Heart left ventricle (tissue), 16 donors: ENCODE measurements at regions of chr3 and their contacts with region 1.

Region 1: GRCh38 chr3:158718490-158719170 is 13.6 kb downstream of the RARRES1 start:
- DNase-seq: no peak
- ATAC-seq: peak in 3 of 4 donors; percentile 23 to 63 (median 32)
- H3K4me3 ChIP-seq: no peak overlapping the region
- H3K27ac ChIP-seq: peak overlapping the region in 2 of 12 donors; percentile 11 to 28
- H3K4me1 ChIP-seq: peaks cover 0 to 43% (median 19%) of the 10 kb centered on the region in 12 donors
- H3K27me3 ChIP-seq: no peaks in the 10 kb centered on the region
- CTCF ChIP-seq: no peak
- POLR2A ChIP-seq: no peak

Region 2: DNA sequence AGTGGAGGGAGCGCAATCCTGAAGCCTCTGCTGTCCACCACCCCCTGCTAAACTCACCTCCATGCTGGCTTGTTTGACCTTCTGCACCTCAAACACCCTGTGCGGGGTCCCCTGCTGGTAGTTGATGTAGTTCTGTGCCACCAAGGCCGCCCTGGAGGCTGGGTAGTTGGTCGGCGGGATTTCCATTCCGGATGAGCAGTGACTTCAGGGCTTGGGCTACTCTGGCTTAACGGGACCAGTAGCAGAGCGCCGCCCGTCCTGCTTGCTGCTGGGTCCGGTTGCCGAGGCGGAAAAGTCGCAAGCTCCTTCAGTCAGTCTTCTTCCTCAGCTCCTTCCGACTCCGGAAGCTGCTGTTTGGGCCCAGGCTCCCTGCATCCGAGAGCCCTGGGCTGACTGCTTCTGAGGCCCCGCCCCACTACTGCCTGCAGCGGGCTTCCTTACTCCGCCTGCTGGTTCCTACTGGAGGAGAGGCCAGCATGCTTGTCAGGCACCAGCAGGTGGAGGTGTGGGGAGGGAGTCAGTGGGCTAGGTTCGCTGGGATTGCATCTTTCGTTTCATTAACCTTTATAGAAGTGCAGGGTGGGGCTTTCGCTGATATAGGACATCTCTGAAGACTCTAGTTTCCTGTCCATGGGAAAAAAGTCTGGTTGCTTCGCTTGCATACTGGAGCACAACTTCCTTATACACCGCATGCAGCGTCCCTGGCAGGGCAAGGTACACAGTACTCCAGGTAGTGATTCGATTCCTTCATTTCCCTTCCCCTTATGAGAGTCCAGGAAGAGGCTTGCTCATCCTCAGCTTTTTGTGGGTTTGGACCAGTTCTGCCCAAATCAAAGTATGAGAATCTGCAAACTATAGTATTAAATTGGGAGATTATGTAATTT is 46.1 kb before region 1 on chr3 and contains the start of gene LXN:
- intact Hi-C with region 1: loop called in 1 of 10 experiments (anchors 5 kb)
- DNase-seq: peak; percentile 83 to 90 (median 85)
- ATAC-seq: peak; percentile 95 to 99 (median 99)
- H3K4me3 ChIP-seq: peak within 1 kb of the TSS in 11 of 12 donors; percentile 21 to 68 (median 60)
- H3K27ac ChIP-seq: peak within 1 kb of the TSS; percentile 4 to 82 (median 72)
- H3K4me1 ChIP-seq: peaks cover 0 to 23% (median 5%) of the 10 kb centered on the region in 12 donors
- H3K27me3 ChIP-seq: no peaks in the 10 kb centered on the region
- CTCF ChIP-seq: peak; percentile 34 to 89 (median 55)
- POLR2A ChIP-seq: no peak
- total RNA-seq, gene LXN: 2.3 to 21.8 (median 3.5) TPM